HEK293 (cell line): ENCODE measurements at regions of chr1 and their contacts with region 1.

Region 1: DNA sequence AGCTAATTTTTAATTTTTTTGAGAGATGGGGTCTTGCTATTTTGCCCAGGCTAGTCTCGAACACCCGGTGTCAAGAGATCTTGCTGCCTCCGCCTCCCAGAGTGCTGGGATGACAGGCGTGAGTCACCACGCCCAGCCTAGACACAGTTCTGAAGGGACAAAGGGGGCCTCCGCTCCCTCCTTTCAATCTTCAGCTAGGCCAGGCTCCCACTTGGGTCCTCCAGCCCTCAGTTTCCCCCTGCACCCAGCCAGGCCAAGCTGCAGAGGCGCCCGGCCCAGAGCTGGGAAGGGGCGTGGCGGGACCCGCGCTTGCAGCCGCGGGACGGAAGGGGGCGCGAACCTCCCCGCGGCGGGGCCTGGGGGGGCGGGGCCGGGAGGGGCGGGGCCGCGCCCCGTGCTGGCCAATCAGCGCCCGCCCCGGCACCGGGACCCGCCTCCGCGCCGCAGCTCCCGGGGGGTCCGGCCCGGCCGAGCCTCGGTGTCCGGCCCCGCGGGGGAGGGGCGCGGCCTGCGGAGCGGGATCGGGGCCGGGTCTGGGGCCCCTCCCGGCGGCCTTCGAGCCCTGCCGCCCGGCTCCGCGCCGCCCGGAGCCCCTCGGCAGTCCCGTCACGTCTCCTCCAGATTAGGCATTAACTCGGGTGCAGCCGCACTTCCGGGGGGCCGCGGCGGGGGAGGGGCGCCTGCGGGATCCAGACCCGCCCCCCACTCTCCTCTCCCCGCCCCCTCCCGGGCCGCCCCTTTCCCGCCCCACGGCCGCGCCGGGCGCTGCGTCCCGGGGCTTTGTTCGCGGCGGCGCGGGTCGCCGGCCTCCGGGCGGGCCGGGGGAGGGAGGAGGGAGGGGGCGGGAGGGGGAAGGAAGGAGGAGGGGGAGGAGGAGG is 559 bp upstream of the AGRN start:
- H3K4me3 ChIP-seq: peak overlapping the region; percentile 45
- H3K27ac ChIP-seq: peak overlapping the region; percentile 64; the same call in 1 of the 2 replicates
- H3K4me1 ChIP-seq: peaks cover 3% of the 10 kb centered on the region; the same call in 1 of the 2 replicates
- CTCF ChIP-seq: peak; percentile 68

Region 2: GRCh38 chr1:1040004-1040991 is 20.9 kb after region 1 on chr1:
- CTCF ChIA-PET with region 1: interaction called, 3 read pairs
- POLR2A ChIA-PET with region 1: interaction called, 11 read pairs
- H3K4me3 ChIP-seq: no peak overlapping the region
- H3K27ac ChIP-seq: no peak overlapping the region
- H3K4me1 ChIP-seq: no peaks in the 10 kb centered on the region
- CTCF ChIP-seq: no peak